Heart right ventricle (tissue), 16 donors: ENCODE measurements at regions of chr1 and their contacts with region 1.

Region 1: GRCh38 chr1:54384911-54385726 is 21.1 kb downstream of the SSBP3 start:
- DNase-seq: no peak
- ATAC-seq: peak; percentile 39 to 70 (median 53)
- H3K4me3 ChIP-seq: no peak overlapping the region
- H3K27ac ChIP-seq: peak overlapping the region in 9 of 10 donors; percentile 41 to 85 (median 65)
- H3K4me1 ChIP-seq: peaks cover 12 to 52% (median 32%) of the 10 kb centered on the region in 9 donors
- H3K27me3 ChIP-seq: no peaks in the 10 kb centered on the region
- CTCF ChIP-seq: no peak

Region 2: GRCh38 chr1:54310439-54311328 is 74.4 kb before region 1 on chr1:
- intact Hi-C with region 1: loop called in 1 of 10 experiments (anchors 5 kb)
- DNase-seq: peak; percentile 57 to 68
- ATAC-seq: peak in 6 of 8 donors; percentile 22 to 52 (median 43)
- H3K4me3 ChIP-seq: no peak overlapping the region
- H3K27ac ChIP-seq: peak overlapping the region in 6 of 10 donors; percentile 19 to 88 (median 74)
- H3K4me1 ChIP-seq: peaks cover 14 to 92% (median 83%) of the 10 kb centered on the region in 9 donors
- H3K27me3 ChIP-seq: no peaks in the 10 kb centered on the region
- CTCF ChIP-seq: peak; percentile 16 to 71 (median 67)

Region 3: DNA sequence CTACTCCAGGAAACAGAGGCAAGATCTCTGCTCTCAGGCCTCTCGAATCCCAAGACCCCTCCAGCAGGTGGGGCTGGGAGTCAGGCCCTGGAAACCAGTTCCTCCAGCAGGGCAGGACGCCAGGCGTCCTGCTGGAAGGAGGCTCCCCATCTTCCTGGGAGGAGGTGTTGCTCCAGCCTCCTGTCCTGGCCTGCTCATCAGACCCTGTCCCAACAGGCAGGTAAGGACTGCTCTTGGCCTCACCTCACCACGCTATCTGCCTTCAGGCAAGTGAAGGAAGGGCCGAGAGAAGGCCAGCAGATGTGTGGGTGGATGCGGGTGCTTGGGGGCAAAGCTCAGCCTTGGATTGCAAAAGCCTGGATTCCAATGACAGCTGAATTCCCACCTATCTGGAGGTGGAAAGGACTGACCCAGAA is 61.8 kb before region 1 on chr1:
- intact Hi-C with region 1: loop called in 1 of 10 experiments (anchors 5 kb)
- DNase-seq: no peak
- ATAC-seq: peak in 3 of 8 donors; percentile 24 to 32 (median 29)
- H3K4me3 ChIP-seq: no peak overlapping the region
- H3K27ac ChIP-seq: peak overlapping the region in 1 of 10 donors; percentile 69
- H3K4me1 ChIP-seq: peaks cover 25 to 67% (median 58%) of the 10 kb centered on the region in 9 donors
- H3K27me3 ChIP-seq: no peaks in the 10 kb centered on the region
- CTCF ChIP-seq: peak in 7 of 9 donors; percentile 18 to 57 (median 31)

Region 4: GRCh38 chr1:54347955-54348699 is 37.0 kb before region 1 on chr1:
- intact Hi-C with region 1: no loop called
- DNase-seq: no peak
- ATAC-seq: peak in 1 of 8 donors; percentile 20
- H3K4me3 ChIP-seq: no peak overlapping the region
- H3K27ac ChIP-seq: no peak overlapping the region
- H3K4me1 ChIP-seq: peaks cover 0 to 38% (median 12%) of the 10 kb centered on the region in 9 donors
- H3K27me3 ChIP-seq: no peaks in the 10 kb centered on the region
- CTCF ChIP-seq: no peak

Region 5: DNA sequence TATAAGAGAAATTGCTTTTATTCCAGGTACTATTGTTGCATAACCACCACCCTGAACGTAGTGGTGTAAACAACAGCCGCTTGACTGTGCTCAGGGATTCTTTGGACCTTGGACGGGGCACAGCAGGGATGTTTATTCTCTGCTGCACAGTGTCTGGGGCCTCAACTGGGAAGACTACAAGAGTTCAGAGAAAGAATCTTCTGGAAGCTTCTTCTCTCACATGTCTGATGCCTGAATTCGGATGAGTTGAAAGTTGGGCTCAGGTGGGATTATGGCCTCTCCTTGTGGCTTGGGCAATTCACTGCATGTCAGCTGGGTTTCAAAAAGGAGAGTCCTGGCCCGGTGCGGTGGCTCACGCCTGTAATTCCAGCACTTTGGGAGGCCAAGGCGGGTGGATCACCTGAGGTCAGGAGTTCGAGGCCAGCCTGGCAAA is 40.0 kb after region 1 on chr1:
- intact Hi-C with region 1: no loop called
- DNase-seq: no peak
- ATAC-seq: no peak
- H3K4me3 ChIP-seq: no peak overlapping the region
- H3K27ac ChIP-seq: no peak overlapping the region
- H3K4me1 ChIP-seq: no peaks in the 10 kb centered on the region
- H3K27me3 ChIP-seq: no peaks in the 10 kb centered on the region
- CTCF ChIP-seq: peak in 4 of 9 donors; percentile 6 to 16 (median 14)

Region 6: GRCh38 chr1:54698346-54698745 is 313.2 kb after region 1 on chr1:
- intact Hi-C with region 1: no loop called
- DNase-seq: no peak
- ATAC-seq: no peak
- H3K4me3 ChIP-seq: no peak overlapping the region
- H3K27ac ChIP-seq: no peak overlapping the region
- H3K4me1 ChIP-seq: no peaks in the 10 kb centered on the region
- H3K27me3 ChIP-seq: no peaks in the 10 kb centered on the region
- CTCF ChIP-seq: no peak

Region 7: GRCh38 chr1:54781023-54781723 is 396.1 kb after region 1 on chr1:
- intact Hi-C with region 1: no loop called
- DNase-seq: no peak
- ATAC-seq: peak in 3 of 8 donors; percentile 31 to 55 (median 33)
- H3K4me3 ChIP-seq: peak overlapping the region in 1 of 10 donors; percentile 23
- H3K27ac ChIP-seq: no peak overlapping the region
- H3K4me1 ChIP-seq: peaks cover 0 to 7% (median 0%) of the 10 kb centered on the region in 9 donors
- H3K27me3 ChIP-seq: peaks cover 4 to 41% (median 27%) of the 10 kb centered on the region in 7 donors
- CTCF ChIP-seq: no peak